Endothelial cell of umbilical vein (primary cell): ENCODE measurements at regions of chr1 and their contacts with region 1.

Region 1: GRCh38 chr1:86419277-86419903 is 4.6 kb upstream of the CLCA2 start:
- DNase-seq: no peak
- H3K4me3 ChIP-seq: no peak overlapping the region
- H3K27ac ChIP-seq: no peak overlapping the region
- H3K4me1 ChIP-seq: peaks cover 4% of the 10 kb centered on the region
- H3K27me3 ChIP-seq: no peaks in the 10 kb centered on the region
- CTCF ChIP-seq: peak; percentile 6 to 35
- POLR2A ChIP-seq: no peak

Region 2: GRCh38 chr1:86356247-86356646 is 63.1 kb before region 1 on chr1:
- CTCF ChIA-PET with region 1: no interaction called
- POLR2A ChIA-PET with region 1: no interaction called
- dilution Hi-C with region 1: no loop called
- intact Hi-C with region 1: no loop called
- DNase-seq: no peak
- H3K4me3 ChIP-seq: no peak overlapping the region
- H3K27ac ChIP-seq: no peak overlapping the region
- H3K4me1 ChIP-seq: no peaks in the 10 kb centered on the region
- H3K27me3 ChIP-seq: no peaks in the 10 kb centered on the region
- CTCF ChIP-seq: no peak
- POLR2A ChIP-seq: no peak

Region 3: DNA sequence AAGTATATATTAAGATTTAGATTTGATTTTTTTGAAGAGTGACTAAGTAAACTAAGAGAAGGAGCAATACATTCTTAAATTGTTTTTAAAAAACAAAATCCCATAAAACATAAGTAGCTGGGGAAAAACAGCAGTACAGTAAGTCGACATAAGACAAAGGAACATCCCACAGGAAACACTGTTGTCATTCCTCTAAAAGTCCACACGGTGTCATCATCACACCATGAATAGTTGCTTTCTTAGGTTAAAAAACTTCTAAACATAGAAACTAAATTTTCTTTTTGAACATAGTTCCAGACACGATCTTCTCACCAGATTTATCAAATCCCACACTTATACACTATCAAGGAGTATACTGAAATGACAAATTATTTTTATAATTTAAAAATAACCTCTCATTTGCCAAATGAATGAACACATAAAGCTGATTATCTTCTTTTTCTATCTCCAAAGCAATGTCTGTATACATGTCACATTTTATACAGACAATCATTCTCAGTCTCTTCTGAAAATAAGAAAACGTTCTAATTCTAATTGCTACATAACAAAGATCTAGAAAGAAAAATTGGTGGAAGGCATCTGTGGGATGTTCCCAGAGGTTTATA is 39.0 kb before region 1 on chr1:
- CTCF ChIA-PET with region 1: no interaction called
- POLR2A ChIA-PET with region 1: no interaction called
- dilution Hi-C with region 1: no loop called
- intact Hi-C with region 1: no loop called
- DNase-seq: peak; percentile 82
- H3K4me3 ChIP-seq: no peak overlapping the region
- H3K27ac ChIP-seq: no peak overlapping the region
- H3K4me1 ChIP-seq: peaks cover 14% of the 10 kb centered on the region
- H3K27me3 ChIP-seq: no peaks in the 10 kb centered on the region
- CTCF ChIP-seq: peak; percentile 34 to 43
- POLR2A ChIP-seq: no peak

Region 4: DNA sequence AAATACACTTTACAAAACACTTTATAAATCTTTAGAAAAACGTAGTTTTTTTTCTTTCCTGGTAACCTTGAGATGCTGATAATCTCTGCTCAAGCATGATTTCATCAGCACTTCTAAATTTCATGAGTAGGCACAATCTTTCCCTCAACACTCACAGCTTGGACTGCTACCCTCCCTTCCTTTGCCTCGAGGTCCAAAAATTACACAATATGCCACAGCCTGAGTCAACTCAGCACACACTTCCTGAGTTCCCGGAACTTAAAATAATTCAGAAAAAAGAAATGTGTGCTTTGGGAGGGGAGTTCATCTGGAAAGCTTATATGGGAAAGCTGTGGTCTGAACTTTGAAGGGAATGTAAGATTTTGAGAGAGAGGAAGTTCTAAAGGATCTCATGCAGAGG is 10.4 kb after region 1 on chr1:
- CTCF ChIA-PET with region 1: no interaction called
- POLR2A ChIA-PET with region 1: interaction called, 10 read pairs
- dilution Hi-C with region 1: no loop called
- intact Hi-C with region 1: no loop called
- DNase-seq: peak; percentile 81
- H3K4me3 ChIP-seq: no peak overlapping the region
- H3K27ac ChIP-seq: peak overlapping the region; percentile 40
- H3K4me1 ChIP-seq: peaks cover 13% of the 10 kb centered on the region
- H3K27me3 ChIP-seq: peaks cover 0 to 3% of the 10 kb centered on the region in 2 experiments
- CTCF ChIP-seq: no peak
- POLR2A ChIP-seq: no peak

Region 5: GRCh38 chr1:86460998-86461397 is 41.6 kb after region 1 on chr1:
- CTCF ChIA-PET with region 1: no interaction called
- POLR2A ChIA-PET with region 1: no interaction called
- dilution Hi-C with region 1: no loop called
- intact Hi-C with region 1: no loop called
- DNase-seq: no peak
- H3K4me3 ChIP-seq: no peak overlapping the region
- H3K27ac ChIP-seq: no peak overlapping the region
- H3K4me1 ChIP-seq: no peaks in the 10 kb centered on the region
- H3K27me3 ChIP-seq: peaks cover 6 to 15% of the 10 kb centered on the region in 2 experiments
- CTCF ChIP-seq: no peak
- POLR2A ChIP-seq: no peak

Region 6: GRCh38 chr1:86499987-86500593 is 80.7 kb after region 1 on chr1:
- CTCF ChIA-PET with region 1: no interaction called
- POLR2A ChIA-PET with region 1: no interaction called
- dilution Hi-C with region 1: no loop called
- intact Hi-C with region 1: loop called (anchors 1 kb)
- DNase-seq: peak; percentile 9
- H3K4me3 ChIP-seq: no peak overlapping the region
- H3K27ac ChIP-seq: no peak overlapping the region
- H3K4me1 ChIP-seq: no peaks in the 10 kb centered on the region
- H3K27me3 ChIP-seq: peaks cover 5 to 13% of the 10 kb centered on the region in 2 experiments
- CTCF ChIP-seq: peak; percentile 60 to 83
- POLR2A ChIP-seq: no peak

Region 7: GRCh38 chr1:86507935-86508582 is 88.7 kb after region 1 on chr1:
- CTCF ChIA-PET with region 1: no interaction called
- POLR2A ChIA-PET with region 1: no interaction called
- dilution Hi-C with region 1: no loop called
- intact Hi-C with region 1: loop called (anchors 2 kb)
- DNase-seq: peak; percentile 28
- H3K4me3 ChIP-seq: no peak overlapping the region
- H3K27ac ChIP-seq: no peak overlapping the region
- H3K4me1 ChIP-seq: no peaks in the 10 kb centered on the region
- H3K27me3 ChIP-seq: peaks cover 0 to 3% of the 10 kb centered on the region in 2 experiments
- CTCF ChIP-seq: peak; percentile 16 to 38
- POLR2A ChIP-seq: no peak